Activated CD4-positive, alpha-beta memory T cell treated with anti-CD3 and anti-CD28 coated beads for 36 hours (primary cell): ENCODE measurements at regions of chr2 and their contacts with region 1.

Region 1: DNA sequence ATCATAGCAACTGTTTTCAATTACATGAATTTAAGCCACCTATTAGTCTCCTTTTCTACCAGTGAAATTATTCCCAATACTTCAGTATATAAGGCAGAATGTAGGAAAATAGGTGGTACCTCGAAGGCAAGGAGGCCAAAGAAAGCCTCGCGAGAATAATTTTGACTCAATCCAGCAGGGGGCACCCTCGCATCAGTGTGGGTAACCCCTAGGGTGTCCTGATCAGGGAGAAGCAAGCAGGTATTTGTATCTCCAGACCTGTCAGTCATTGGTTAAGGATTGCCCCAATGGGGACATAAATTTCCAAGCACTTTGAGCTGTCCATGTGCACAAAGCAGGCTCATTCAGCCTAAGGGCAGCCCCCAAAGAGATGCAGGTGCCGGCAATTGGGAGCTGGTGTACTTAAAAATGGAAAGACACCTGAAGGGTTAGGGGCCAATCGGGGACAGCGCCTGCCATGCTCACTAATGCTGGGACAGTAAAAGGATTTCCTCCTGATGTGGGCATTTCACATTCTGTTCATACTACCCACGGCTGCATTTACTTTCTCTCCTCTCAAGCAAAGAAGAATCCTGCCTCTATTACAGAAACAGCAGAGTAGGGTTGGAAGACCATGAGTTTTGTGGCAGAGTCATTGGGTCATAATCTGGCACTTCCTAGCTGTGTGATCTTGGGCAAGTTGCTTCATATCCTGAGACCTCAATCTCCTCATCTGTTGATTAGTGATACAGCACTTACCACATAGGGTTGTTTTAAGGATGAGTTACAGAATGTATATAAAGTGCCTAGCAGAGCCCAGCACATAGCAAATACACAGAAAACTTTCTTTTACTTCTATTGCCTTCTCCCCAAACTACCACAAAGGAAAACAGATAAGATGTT is 136.1 kb downstream of the ICOS start:
- DNase-seq: peak; percentile 85
- H3K4me3 Mint-ChIP-seq: no peak overlapping the region
- H3K27ac Mint-ChIP-seq: no peak overlapping the region
- H3K4me1 Mint-ChIP-seq: no peaks in the 10 kb centered on the region
- H3K27me3 Mint-ChIP-seq: peaks cover 3% of the 10 kb centered on the region

Region 2: DNA sequence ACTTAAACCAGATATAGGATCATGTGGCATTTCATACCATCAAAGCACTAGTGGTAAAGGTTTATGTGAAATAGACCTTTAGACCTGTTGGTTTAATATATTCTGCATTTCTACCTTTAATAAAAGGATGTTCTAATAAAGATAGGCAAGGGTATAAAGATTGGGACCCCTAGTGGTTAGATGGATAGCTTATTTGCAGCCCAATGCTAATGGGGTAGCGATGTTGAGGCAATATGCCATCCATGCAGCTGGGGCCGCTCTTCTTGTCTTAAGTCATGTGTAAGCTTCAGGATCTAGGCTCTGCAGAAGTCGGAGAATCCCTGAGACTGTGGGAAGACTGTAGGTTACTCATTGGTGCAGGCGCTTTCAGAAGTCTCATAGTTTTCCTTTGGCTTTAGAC is 21.2 kb before region 1 on chr2:
- CTCF ChIA-PET with region 1: interaction called, 10 read pairs
- POLR2A ChIA-PET with region 1: interaction called, 3 read pairs
- intact Hi-C with region 1: no loop called
- DNase-seq: no peak
- H3K4me3 Mint-ChIP-seq: no peak overlapping the region
- H3K27ac Mint-ChIP-seq: no peak overlapping the region
- H3K4me1 Mint-ChIP-seq: peaks cover 16% of the 10 kb centered on the region
- H3K27me3 Mint-ChIP-seq: no peaks in the 10 kb centered on the region

Region 3: DNA sequence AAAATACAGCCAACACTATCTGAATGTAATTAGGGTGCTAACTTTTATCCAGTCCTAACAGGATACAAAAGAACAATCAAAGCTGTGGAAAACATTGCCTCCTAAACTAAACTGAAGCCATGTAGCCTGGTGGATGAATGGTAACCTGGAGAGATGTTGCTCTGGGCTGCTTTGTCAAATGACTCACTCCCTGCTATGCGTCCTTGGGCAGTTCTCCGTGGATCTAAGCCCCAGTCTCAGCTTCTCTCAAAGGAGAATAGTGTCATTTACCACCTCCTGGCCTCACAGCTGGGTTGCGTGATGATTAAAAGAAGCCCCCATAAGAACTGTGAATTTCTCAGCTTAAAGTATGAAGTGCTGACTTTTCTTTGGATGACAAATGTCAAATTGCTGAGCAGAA is 67.6 kb after region 1 on chr2:
- CTCF ChIA-PET with region 1: interaction called, 14 read pairs
- POLR2A ChIA-PET with region 1: no interaction called
- intact Hi-C with region 1: loop called (anchors 1 kb)
- DNase-seq: no peak
- H3K4me3 Mint-ChIP-seq: no peak overlapping the region
- H3K27ac Mint-ChIP-seq: no peak overlapping the region
- H3K4me1 Mint-ChIP-seq: peaks cover 5% of the 10 kb centered on the region
- H3K27me3 Mint-ChIP-seq: peaks cover 2% of the 10 kb centered on the region

Region 4: DNA sequence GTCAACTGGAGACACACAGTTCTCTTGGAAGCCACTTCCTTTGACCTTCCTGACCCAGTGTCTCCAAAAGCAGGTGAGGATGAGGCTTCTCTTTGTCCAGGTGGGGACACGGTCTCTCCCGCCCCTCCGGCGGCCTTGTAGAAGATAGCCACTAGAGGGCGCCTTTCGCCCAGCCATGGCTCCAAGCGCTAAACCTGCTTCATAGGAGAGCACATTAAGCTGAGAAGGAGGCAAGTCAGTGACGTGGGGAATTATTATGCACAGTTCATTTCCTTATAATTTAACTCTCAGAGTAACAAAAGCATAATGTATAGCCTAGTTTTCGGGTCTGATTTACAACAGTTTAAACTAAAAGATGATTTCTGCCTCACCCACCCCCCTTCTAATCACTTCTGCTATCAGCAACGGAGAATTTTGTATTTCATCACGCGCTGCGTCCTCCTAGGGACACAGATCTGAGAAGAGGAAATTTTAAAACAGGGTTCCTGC is 72.6 kb after region 1 on chr2:
- CTCF ChIA-PET with region 1: interaction called, 14 read pairs
- POLR2A ChIA-PET with region 1: no interaction called
- intact Hi-C with region 1: loop called (anchors 1 kb)
- DNase-seq: peak; percentile 88
- H3K4me3 Mint-ChIP-seq: peak overlapping the region; percentile 73
- H3K27ac Mint-ChIP-seq: no peak overlapping the region
- H3K4me1 Mint-ChIP-seq: peaks cover 10% of the 10 kb centered on the region
- H3K27me3 Mint-ChIP-seq: peaks cover 12% of the 10 kb centered on the region

Region 5: DNA sequence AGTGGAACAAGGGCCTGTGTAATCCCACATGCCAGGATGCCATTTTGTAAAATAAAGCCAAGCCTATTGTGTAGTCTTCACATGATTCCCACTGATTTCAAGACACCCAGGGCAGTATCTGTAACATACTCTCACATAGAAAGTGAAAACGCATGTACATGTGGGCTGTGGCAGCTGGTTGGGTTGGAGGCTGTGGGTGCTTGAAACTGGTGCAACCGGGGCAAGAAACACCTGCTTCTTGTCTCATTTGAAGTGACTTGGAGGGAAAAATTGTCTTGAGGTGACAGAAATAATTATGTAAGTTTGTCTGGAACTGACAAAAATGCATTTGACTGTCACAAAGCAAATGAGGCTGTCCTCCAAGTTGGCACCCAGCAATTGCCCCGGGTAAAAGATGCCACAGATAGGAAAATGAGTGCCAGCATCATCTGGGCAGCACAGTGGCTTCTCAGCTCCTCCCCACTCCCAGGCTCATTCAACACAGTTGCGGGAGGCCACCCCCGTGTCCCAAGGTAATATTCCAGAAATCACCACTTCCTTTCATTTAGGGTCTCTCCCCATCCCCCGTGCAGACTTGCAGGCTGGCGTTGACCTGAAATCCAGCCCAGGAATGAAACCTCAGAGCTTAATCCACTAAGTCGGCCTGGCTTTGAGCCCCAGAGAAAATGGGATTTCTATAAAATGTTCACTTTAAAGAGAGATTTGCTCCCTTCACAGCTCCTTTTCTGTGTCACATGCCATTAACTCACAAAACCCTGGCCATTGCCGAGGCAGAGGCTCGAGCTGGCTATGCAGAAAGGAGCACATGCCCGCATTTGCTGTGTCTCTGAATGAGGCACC is 178.7 kb after region 1 on chr2:
- CTCF ChIA-PET with region 1: interaction called, 4 read pairs
- POLR2A ChIA-PET with region 1: no interaction called
- intact Hi-C with region 1: loop called (anchors 5 kb)
- DNase-seq: peak; percentile 26
- H3K4me3 Mint-ChIP-seq: no peak overlapping the region
- H3K27ac Mint-ChIP-seq: no peak overlapping the region
- H3K4me1 Mint-ChIP-seq: no peaks in the 10 kb centered on the region
- H3K27me3 Mint-ChIP-seq: peaks cover 14% of the 10 kb centered on the region